Transverse colon (tissue), 4 donors: ENCODE measurements at regions of chr16 and their contacts with region 1.

Region 1: DNA sequence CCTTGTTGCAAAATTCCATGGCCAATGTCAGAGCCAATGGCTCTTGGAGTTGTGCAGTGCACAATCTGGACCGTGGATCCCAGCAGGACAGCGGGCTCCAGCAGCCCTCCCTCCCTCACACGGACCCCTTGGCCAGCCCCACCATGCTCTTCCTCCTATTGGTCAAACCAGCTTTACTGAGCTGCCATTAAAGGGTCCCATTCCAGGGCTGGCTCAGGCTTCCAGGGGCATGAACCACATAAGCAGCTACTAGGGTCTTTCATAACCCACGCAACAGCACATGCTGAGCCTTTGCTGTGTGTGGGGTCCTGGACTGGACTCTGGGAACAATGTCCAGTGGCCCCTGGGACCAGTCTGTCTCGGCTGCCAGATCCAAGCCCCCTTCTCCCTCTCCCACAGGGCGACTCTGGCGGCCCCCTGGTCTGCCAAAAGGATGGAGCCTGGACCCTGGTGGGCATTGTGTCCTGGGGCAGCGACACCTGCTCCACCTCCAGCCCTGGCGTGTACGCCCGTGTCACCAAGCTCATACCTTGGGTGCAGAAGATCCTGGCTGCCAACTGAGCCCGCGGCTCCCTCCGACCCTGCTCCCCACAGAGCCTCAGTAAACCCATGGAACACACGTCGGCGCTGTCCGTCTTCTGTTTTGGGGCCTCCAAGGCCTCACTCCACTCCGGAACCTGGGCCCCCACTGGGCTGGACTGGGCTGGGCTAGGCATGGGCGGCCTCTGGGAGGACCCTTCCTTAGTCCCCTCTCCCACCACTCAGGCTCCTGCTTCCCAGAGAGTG is 5.7 kb downstream of the CTRB1 start:
- DNase-seq: no peak
- H3K4me3 ChIP-seq: no peak overlapping the region
- H3K27ac ChIP-seq: no peak overlapping the region
- H3K4me1 ChIP-seq: no peaks in the 10 kb centered on the region
- H3K27me3 ChIP-seq: peaks cover 8% of the 10 kb centered on the region
- CTCF ChIP-seq: no peak
- EP300 ChIP-seq: no peak
- POLR2A ChIP-seq: no peak

Region 2: DNA sequence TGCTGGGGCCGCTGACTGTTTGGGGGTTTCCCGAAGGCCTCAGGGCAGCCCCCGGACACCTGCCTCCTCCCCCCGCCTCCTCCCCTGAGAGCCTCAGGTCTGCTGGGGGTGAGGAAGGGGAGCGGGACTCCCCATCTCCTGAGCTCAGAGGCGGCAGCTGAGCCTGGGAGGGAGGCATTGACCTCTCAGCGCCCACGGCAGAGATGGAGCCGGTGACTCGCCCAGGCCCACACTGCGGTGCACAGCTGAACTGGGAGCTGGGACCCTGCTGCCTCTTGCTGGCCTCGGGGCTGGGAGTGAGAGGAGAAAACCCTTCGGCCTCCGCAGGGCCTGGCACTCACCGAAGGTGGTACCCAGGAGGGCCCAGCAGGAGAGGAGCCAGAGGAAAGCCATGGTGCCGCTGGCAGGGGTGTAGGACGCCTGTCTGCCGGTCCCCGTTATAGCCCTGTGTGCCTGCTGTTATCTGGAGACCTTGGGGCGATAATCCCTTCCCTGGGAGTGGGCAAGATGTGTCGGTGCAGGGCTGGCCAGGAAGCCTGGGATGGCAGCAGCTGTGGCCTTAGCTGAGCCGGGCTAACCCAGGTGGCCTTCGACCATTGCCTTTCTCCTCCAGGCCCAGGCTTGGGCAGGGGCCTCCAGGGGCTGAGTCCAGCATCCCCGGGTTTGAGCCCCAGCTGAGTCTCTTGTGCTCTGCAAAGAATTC is 17.6 kb before region 1 on chr16 and contains the start of gene CTRB2:
- in situ Hi-C with region 1: no loop called
- intact Hi-C with region 1: loop called (anchors 2 kb)
- DNase-seq: no peak
- H3K4me3 ChIP-seq: no peak within 1 kb of the TSS
- H3K27ac ChIP-seq: no peak within 1 kb of the TSS
- H3K4me1 ChIP-seq: no peaks in the 10 kb centered on the region
- H3K27me3 ChIP-seq: no peaks in the 10 kb centered on the region
- CTCF ChIP-seq: no peak
- EP300 ChIP-seq: no peak
- POLR2A ChIP-seq: no peak
- total RNA-seq, gene CTRB2: not detected